ENCODE measurements at regions of chr10 and their contacts with region 1.

Region 1: DNA sequence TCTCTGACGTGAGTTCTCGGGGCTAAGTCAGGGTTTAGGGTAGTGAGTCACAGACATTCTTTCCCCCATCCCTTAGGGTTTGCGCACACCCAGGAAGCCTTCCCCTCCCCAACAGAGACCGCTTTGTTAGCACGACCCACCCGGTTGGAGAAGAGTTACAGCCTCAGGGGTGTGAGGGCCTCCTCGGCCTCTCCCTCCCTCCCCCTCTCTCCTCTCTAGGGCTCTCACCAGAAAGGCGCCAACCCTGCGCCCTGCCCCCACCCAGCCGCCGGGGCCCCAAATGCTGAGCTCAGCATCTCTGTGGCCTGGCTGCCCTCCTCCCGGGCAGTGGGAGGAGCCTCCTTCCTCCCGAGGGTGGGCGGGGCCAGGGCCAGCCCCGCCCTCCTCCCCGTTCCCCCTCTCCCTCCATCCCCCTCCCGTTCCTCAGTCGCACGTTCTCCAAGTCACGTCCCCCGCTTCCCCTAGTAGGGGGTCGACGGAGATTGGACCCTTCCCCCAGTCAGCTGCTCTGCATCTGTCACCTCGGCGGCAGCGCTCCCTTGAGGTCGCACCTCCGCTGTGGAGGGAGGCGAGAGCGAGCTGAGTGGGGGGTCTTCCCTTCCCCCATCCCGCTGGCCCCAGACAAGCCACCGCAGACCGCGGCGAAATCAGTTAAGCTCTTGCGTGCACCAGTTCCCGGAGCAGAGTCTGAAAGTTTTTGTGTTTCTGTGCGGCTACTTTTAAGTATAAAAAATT is 13.0 kb upstream of the DDIT4 start:
- DNase-seq: peak; percentile 97
- ATAC-seq: peak; percentile 78
- H3K4me3 Mint-ChIP-seq: peak overlapping the region; percentile 68
- H3K27ac Mint-ChIP-seq: peak overlapping the region; percentile 98
- H3K4me1 Mint-ChIP-seq: peaks cover 55% of the 10 kb centered on the region
- H3K27me3 Mint-ChIP-seq: no peaks in the 10 kb centered on the region

Region 2: DNA sequence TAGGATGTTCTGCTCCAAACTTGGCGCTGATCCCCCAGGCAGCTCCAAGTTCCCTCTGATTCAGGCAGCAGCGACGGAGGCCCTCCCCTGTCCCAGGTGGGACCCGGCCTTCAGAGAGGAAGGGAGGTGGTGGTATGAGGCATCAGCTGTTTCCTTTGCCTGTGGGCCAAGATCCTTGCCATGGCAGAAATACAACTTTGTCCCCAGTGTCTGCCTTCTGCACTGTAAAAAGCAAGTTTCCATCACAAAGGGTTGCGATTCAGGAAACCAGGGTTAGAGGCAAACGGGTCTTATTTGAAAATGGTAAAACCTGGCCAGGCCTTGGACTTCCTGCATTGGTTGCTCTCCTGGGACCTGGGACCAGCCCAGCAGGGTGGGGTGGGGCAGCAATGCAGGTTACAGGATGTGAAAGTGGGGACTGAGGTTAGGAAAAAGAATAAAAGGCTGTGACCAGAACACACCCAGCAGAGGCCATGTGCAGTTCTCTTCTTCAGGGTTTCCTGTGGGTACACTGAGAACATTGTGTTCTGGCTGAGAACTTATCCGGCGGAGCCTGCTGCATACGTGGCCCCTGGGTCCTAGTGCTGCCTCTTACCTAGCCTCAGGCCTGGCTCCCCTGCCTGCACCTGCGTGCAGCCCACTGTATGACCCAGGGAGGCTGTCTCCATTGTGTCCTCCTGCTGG is 12.1 kb before region 1 on chr10:
- CTCF ChIA-PET with region 1: interaction called, 55 read pairs
- DNase-seq: peak; percentile 93
- ATAC-seq: peak; percentile 91
- H3K4me3 Mint-ChIP-seq: peak overlapping the region; percentile 69
- H3K27ac Mint-ChIP-seq: peak overlapping the region; percentile 92
- H3K4me1 Mint-ChIP-seq: peaks cover 76% of the 10 kb centered on the region
- H3K27me3 Mint-ChIP-seq: no peaks in the 10 kb centered on the region

Region 3: GRCh38 chr10:72297968-72298773 is 37.4 kb after region 1 on chr10:
- CTCF ChIA-PET with region 1: interaction called, 11 read pairs
- DNase-seq: peak; percentile 98
- ATAC-seq: peak; percentile 81
- H3K4me3 Mint-ChIP-seq: peak overlapping the region; percentile 77
- H3K27ac Mint-ChIP-seq: peak overlapping the region; percentile 99
- H3K4me1 Mint-ChIP-seq: peaks cover 59% of the 10 kb centered on the region
- H3K27me3 Mint-ChIP-seq: no peaks in the 10 kb centered on the region

Measured in activated CD8-positive, alpha-beta memory T cell treated with anti-CD3 and anti-CD28 coated beads, Interleukin-2, amount 10 ng/mL, durations not matched to agents 7 days and 5 days (primary cell).